Dendritic cell treated with granulocyte-macrophage colony-stimulating factor and Interleukin-4, amounts not matched to agents 40 ng/mL and 50 ng/mL, for 4 days (primary cell): ENCODE measurements at regions of chr5 and their contacts with region 1.

Region 1: DNA sequence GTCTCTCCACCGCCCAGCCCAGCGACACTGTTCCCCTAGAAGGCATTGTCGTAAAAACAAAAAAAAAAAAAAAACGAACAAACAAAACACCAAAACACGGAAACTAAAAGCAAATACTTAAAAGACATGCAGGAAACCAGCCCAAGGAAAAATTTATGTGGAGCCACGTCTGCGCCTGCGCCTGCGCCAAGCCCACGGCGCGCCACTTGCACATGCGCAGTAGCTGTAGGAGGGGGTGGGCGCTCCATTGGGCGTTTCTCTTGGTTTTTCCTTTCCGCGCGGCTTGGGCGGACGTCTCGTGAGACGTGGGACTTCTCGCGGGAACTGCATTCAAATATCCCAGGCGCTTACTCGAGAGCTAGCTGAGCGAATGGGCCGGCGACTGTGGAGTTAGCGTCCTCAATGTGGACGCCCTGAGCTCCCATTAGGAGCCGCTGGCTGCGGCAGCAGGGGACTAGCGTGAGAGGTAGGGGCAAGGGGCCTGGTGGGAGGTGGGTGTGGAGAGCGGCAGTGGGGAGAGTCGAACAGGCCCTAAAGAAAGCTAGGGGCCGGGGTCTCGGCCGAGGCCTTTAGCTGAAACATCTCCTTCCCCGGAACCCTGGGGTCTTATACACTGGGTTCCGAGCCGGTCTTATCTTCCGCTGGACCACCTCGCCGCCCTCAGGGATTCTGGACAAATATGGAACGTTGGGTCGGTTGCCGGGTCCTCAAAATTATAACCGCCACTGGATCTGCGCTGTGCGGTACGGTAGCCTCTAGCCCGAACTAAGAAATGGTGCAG is at the start of gene SPDL1:
- H3K4me3 Mint-ChIP-seq: peak within 1 kb of the TSS; percentile 95
- H3K27ac Mint-ChIP-seq: peak within 1 kb of the TSS; percentile 92
- H3K4me1 Mint-ChIP-seq: peaks cover 10% of the 10 kb centered on the region
- H3K27me3 Mint-ChIP-seq: peaks cover 12% of the 10 kb centered on the region

Region 2: GRCh38 chr5:168679515-168679920 is 904.1 kb before region 1 on chr5:
- intact Hi-C with region 1: loop called (anchors 2 kb)
- H3K4me3 Mint-ChIP-seq: no peak overlapping the region
- H3K27ac Mint-ChIP-seq: no peak overlapping the region
- H3K4me1 Mint-ChIP-seq: peaks cover 6% of the 10 kb centered on the region
- H3K27me3 Mint-ChIP-seq: no peaks in the 10 kb centered on the region

Region 3: DNA sequence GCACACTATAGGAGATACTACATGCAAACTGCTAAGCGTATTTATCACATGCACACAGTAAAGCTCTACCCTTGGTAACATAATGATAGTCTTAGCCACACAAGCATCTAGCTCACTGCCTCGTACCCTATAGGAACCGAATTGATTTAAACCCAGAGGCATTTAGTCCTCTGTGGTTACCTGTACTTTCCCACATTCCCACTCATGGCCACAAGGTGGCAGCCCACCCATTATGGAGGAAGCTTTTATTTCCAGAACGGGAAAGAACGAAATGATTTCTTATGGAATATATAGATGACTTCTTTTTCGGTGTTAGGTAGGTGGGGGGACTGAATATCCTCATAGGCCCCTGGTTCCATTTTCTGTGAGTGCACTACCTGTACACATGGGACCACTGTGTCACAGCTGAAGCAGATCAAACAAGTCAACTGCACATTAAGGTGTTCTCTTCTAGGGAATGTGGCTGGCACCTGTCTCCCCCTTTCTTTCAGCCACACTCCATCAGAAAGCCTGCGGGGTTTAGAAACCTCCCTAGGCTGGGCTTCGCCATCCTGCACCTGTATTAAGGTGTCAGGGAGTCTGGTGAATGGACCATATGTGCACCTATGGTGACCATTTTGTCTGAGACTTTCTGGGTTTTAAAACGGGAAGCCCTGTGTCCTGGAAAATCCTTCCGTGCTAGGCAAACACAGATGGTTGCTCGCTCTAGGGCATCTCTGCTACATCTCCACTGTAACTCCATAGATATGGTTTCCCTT is 595.9 kb before region 1 on chr5:
- intact Hi-C with region 1: loop called (anchors 1 kb)
- H3K4me3 Mint-ChIP-seq: no peak overlapping the region
- H3K27ac Mint-ChIP-seq: no peak overlapping the region
- H3K4me1 Mint-ChIP-seq: no peaks in the 10 kb centered on the region
- H3K27me3 Mint-ChIP-seq: peaks cover 6% of the 10 kb centered on the region

Region 4: GRCh38 chr5:169636477-169637084 is 53.0 kb after region 1 on chr5:
- intact Hi-C with region 1: loop called (anchors 1 kb)
- H3K4me3 Mint-ChIP-seq: peak overlapping the region; percentile 92
- H3K27ac Mint-ChIP-seq: peak overlapping the region; percentile 96
- H3K4me1 Mint-ChIP-seq: peaks cover 53% of the 10 kb centered on the region
- H3K27me3 Mint-ChIP-seq: no peaks in the 10 kb centered on the region

Region 5: DNA sequence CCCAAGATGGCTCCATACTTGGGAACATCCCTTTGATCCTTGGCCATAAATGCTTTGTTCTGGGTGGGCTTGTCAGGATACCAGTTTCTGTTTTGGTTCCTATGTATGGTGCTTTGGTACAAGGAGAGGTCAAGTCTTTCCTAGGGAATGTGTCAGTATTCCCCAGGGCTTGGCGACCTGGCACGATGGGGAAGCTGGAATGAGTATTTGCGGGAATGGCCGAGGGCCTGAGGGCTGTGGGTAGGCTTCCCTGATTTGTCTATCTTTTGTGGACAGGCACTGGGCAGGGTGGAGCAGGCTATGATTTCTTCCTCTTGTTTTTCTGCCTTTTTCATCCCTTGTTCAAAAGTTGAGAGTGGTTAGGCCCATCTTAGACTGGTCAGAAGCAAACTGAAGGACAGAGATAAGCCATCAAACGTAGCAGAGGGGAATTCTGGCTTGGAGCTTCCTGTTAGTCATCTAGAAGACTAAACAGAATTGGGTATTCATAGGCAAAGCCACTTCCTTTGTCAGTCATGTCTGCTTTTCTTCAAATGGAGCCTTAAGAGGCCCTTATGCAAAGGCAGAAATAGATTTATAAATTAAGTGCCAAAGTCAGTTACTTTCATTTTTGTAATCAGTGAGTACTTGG is 67.2 kb after region 1 on chr5:
- intact Hi-C with region 1: loop called (anchors 5 kb)
- H3K4me3 Mint-ChIP-seq: peak overlapping the region; percentile 24
- H3K27ac Mint-ChIP-seq: peak overlapping the region; percentile 94
- H3K4me1 Mint-ChIP-seq: peaks cover 94% of the 10 kb centered on the region
- H3K27me3 Mint-ChIP-seq: no peaks in the 10 kb centered on the region